IMR-90 (cell line): ENCODE measurements at regions of chr19 and their contacts with region 1.

Region 1: GRCh38 chr19:8252922-8253589 is 43.9 kb downstream of the CERS4 start:
- DNase-seq: peak; percentile 70
- ATAC-seq: peak; percentile 98
- H3K4me3 ChIP-seq: no peak overlapping the region
- H3K27ac ChIP-seq: no peak overlapping the region
- H3K4me1 ChIP-seq: peaks cover 3% of the 10 kb centered on the region; the same call in 1 of the 2 replicates
- H3K27me3 ChIP-seq: no peaks in the 10 kb centered on the region
- CTCF ChIP-seq: peak; percentile 98
- POLR2A ChIP-seq: peak; percentile 42; the same call in 1 of the 2 replicates
- RAD21 ChIP-seq: peak; percentile 100

Region 2: DNA sequence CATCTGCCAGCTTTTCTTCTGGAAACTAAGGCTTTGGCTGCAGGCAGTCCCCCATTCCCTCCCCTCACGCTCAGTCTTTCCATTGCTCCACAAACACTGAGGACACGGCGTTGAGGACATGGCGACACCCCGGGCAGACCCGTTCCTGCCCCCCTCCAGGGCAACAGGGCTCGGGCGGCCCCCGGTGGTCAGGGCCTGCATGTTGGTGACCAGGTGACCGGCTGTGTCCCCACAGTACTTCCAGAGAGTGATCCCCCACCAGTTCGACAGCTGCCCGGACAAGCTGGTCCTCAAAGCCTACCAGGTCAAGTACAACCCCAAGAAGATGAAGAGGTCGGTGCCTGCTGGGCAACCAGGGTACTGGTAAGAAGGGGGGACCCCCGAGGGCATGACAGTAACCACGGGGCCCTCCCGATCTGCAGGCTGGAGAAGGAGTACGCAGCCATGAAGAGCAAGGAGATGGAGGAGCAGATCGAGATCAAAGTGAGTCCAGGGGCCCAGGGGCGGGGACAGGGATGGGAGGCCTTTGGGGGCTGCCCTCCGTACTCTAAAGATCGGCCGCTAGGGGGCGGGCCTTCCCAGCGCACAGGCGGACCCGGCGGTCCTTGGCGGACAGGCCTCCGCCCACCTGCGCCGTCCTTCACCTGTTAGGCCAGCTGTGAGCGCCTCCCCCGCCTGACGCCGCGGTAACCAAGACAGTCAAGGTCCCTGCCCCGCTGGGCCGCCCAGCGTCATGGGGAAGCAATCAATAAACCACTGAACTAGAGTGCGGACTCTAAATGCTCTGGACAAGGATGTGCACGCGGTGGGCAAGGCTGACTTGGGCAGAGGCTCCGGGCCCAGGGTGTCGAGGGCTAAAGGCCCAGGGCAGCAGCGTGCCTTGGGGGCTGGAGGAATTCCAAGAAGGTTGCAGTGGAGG is 399.9 kb before region 1 on chr19:
- CTCF ChIA-PET with region 1: no interaction called
- POLR2A ChIA-PET with region 1: no interaction called
- dilution Hi-C with region 1: no loop called
- in situ Hi-C with region 1: no loop called
- intact Hi-C with region 1: loop called (anchors 1 kb)
- DNase-seq: peak; percentile 41
- ATAC-seq: peak; percentile 89
- H3K4me3 ChIP-seq: no peak overlapping the region
- H3K27ac ChIP-seq: no peak overlapping the region
- H3K4me1 ChIP-seq: peaks cover 6% of the 10 kb centered on the region
- H3K27me3 ChIP-seq: no peaks in the 10 kb centered on the region
- CTCF ChIP-seq: peak; percentile 82
- POLR2A ChIP-seq: no peak
- RAD21 ChIP-seq: peak; percentile 78

Region 3: GRCh38 chr19:7943444-7944176 is 309.4 kb before region 1 on chr19 and contains the start of gene TIMM44:
- CTCF ChIA-PET with region 1: interaction called, 6 read pairs
- POLR2A ChIA-PET with region 1: interaction called, 3 read pairs
- dilution Hi-C with region 1: no loop called
- in situ Hi-C with region 1: loop called (anchors 5 kb)
- intact Hi-C with region 1: loop called (anchors 1 kb)
- DNase-seq: peak; percentile 99
- ATAC-seq: peak; percentile 99
- H3K4me3 ChIP-seq: peak within 1 kb of the TSS; percentile 61
- H3K27ac ChIP-seq: peak within 1 kb of the TSS; percentile 80
- H3K4me1 ChIP-seq: no peaks in the 10 kb centered on the region
- H3K27me3 ChIP-seq: no peaks in the 10 kb centered on the region
- CTCF ChIP-seq: no peak
- POLR2A ChIP-seq: peak; percentile 91
- RAD21 ChIP-seq: no peak
- total RNA-seq, gene TIMM44: 37.6 and 43.0 TPM in 2 replicates

Region 4: GRCh38 chr19:7970716-7971448 is 282.2 kb before region 1 on chr19:
- CTCF ChIA-PET with region 1: no interaction called
- POLR2A ChIA-PET with region 1: no interaction called
- dilution Hi-C with region 1: no loop called
- in situ Hi-C with region 1: loop called (anchors 10 kb)
- intact Hi-C with region 1: loop called (anchors 1 kb)
- DNase-seq: peak; percentile 28
- ATAC-seq: peak; percentile 92
- H3K4me3 ChIP-seq: no peak overlapping the region
- H3K27ac ChIP-seq: no peak overlapping the region
- H3K4me1 ChIP-seq: no peaks in the 10 kb centered on the region
- H3K27me3 ChIP-seq: no peaks in the 10 kb centered on the region
- CTCF ChIP-seq: peak; percentile 69
- POLR2A ChIP-seq: no peak
- RAD21 ChIP-seq: peak; percentile 81

Region 5: GRCh38 chr19:8005534-8006256 is 247.4 kb before region 1 on chr19 and contains the start of gene ELAVL1:
- CTCF ChIA-PET with region 1: interaction called, 4 read pairs
- POLR2A ChIA-PET with region 1: no interaction called
- dilution Hi-C with region 1: no loop called
- in situ Hi-C with region 1: no loop called
- intact Hi-C with region 1: loop called (anchors 10 kb)
- DNase-seq: peak; percentile 85
- ATAC-seq: peak; percentile 93
- H3K4me3 ChIP-seq: peak within 1 kb of the TSS; percentile 99
- H3K27ac ChIP-seq: peak within 1 kb of the TSS; percentile 97
- H3K4me1 ChIP-seq: peaks cover 12% of the 10 kb centered on the region
- H3K27me3 ChIP-seq: no peaks in the 10 kb centered on the region
- CTCF ChIP-seq: no peak
- POLR2A ChIP-seq: peak; percentile 88
- RAD21 ChIP-seq: no peak
- total RNA-seq, gene ELAVL1: 56.9 and 59.0 TPM in 2 replicates

Region 6: GRCh38 chr19:8158411-8159074 is 94.5 kb before region 1 on chr19:
- CTCF ChIA-PET with region 1: interaction called, 3 read pairs
- POLR2A ChIA-PET with region 1: no interaction called
- dilution Hi-C with region 1: no loop called
- in situ Hi-C with region 1: loop called (anchors 5 kb)
- intact Hi-C with region 1: loop called (anchors 1 kb)
- DNase-seq: peak; percentile 79
- ATAC-seq: peak; percentile 60
- H3K4me3 ChIP-seq: no peak overlapping the region
- H3K27ac ChIP-seq: no peak overlapping the region
- H3K4me1 ChIP-seq: peaks cover 5% of the 10 kb centered on the region
- H3K27me3 ChIP-seq: no peaks in the 10 kb centered on the region
- CTCF ChIP-seq: peak; percentile 78
- POLR2A ChIP-seq: no peak
- RAD21 ChIP-seq: peak; percentile 78

Region 7: DNA sequence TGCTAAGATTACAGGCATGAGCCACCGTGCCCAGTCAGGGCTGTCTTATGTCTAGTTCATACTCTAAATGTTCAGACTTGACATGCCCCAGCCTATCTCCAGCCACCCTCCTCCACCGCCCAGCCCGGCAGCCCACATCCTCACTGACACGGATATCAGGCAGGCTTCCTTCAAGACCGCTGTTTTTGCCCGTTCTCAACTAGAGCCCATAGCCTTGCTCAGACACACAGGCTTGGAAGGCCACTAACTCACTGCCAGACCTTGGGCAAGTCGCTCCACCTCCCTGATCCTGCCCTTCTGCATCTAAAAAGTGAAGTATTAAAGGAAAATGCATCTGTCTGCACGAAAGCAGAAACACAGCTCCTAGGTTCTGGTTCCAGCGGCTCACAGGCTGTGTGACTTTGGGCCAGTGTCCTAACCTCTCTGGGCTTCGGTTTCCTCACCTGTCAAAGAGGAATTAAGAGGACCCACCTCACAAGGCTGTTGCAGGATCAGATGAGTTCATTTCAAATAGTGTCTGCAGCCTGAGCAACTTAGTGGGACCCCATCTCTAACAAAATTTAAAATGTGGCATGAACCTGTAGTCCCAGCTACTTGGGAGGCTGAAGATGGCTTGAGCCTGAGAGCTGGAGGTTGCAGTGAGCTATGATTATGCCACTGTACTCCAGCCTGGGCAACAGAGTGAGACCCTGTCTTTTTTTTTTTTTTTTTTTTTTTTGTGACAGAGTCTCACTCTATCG is 58.4 kb before region 1 on chr19:
- CTCF ChIA-PET with region 1: no interaction called
- POLR2A ChIA-PET with region 1: no interaction called
- dilution Hi-C with region 1: no loop called
- in situ Hi-C with region 1: no loop called
- intact Hi-C with region 1: no loop called
- DNase-seq: no peak
- ATAC-seq: no peak
- H3K4me3 ChIP-seq: no peak overlapping the region
- H3K27ac ChIP-seq: no peak overlapping the region
- H3K4me1 ChIP-seq: peaks cover 2% of the 10 kb centered on the region; the same call in 1 of the 2 replicates
- H3K27me3 ChIP-seq: peaks cover 2% of the 10 kb centered on the region; the same call in 1 of the 2 replicates
- CTCF ChIP-seq: no peak
- POLR2A ChIP-seq: no peak
- RAD21 ChIP-seq: no peak